ENCODE measurements at regions of chr1 and their contacts with region 1.

Region 1: GRCh38 chr1:210448297-210448892 is 119.7 kb downstream of the HHAT start:
- DNase-seq: peak; percentile 55

Region 2: DNA sequence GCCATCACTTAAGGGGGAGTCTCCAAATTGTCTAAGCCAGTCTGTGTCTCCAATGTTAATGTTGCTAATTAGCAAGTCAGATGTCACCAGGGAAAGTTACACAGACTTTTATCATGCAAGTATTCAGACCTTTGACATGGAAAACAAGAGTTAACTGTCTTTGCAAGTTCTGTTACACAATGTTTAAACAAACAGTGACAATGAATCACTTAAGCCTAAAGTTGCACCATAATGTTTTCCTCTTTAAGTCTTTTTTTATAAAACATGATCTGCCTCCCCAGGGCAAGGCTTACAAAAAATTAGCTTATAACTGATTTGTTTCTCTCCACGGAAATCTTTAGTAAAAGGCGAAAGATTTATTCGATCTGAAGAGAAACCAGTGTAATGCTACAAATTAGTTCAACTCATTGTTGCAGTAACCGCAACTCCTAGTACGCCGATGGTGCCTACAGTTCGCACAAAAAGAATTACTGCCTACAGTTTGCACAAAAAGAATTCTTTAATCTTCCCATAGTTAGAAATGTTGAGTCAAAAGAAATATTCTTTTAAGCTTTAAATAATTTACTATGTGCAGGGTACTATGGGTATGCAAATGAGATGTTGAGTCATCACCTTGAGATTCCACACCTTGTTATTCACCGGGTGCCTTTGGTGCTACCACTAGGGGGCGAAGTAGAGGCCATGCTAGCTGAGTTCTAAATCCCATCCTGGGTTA is 74.4 kb before region 1 on chr1:
- CTCF ChIA-PET with region 1: no interaction called
- POLR2A ChIA-PET with region 1: no interaction called
- DNase-seq: peak; percentile 90

Region 3: DNA sequence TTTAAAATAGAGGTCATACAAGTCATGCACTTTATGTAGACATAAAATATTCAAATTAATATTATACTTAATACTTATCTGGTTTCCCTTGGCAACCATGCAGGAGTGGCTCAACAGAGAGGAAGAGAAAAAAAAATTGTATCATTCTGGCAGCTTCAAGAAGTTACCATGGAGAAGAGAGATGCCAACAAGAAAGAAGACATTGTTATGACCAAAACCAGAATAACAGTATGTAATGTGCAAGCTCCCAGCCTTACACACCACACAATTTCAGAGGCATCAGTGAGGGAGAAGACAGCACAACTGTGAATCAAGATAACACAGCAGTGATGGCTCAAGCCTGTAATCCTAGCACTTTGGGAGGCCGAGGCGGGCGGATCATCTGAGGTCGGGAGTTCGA is 761.7 kb after region 1 on chr1:
- CTCF ChIA-PET with region 1: interaction called, 10 read pairs
- POLR2A ChIA-PET with region 1: no interaction called
- DNase-seq: no peak

Measured in HEK293T (cell line).